Activated B cell treated with CpG ODN at 0.5 μM for 24 hours (primary cell): ENCODE measurements at regions of chr1 and their contacts with region 1.

Region 1: DNA sequence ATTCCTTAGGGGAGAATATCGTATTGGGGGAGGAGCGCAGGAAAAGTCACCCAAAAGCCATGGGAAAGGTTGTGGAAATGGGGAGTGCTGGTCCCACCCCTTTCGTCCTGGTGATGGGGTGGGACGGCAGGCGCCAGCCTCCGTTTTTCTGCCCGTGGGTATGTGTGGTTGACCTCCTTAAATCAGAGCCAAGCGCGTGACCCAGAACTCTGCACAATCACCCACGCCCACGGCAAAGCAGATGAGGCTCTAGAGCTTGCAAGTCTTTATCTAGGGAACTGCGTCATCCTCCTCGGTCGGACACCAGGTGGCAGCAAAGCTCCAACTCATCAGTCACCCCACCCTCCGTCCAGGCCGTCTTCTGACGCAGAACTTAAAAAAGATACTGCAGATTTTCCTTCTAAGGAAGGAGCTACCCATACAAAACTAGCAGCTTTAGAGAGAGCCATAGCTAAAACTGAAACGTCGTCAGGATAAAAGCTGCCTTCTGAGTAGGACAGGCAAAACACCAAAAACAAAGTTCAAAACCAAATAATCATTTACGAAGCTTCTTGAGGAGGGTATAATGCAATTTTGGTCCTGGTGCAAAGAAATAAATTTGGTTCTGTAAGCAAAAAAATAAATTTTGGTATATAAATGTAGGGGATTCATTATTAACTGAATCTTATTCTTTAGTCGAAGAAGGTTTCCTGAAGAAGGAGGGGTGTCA is 62.0 kb downstream of the TBX19 start:
- DNase-seq: peak; percentile 65
- ATAC-seq: peak; percentile 100
- H3K4me3 Mint-ChIP-seq: no peak overlapping the region
- H3K27ac Mint-ChIP-seq: no peak overlapping the region
- H3K4me1 Mint-ChIP-seq: peaks cover 9% of the 10 kb centered on the region
- H3K27me3 Mint-ChIP-seq: no peaks in the 10 kb centered on the region
- CTCF ChIP-seq: no peak

Region 2: GRCh38 chr1:168178638-168179437 is 163.9 kb before region 1 on chr1 and contains the start of gene TIPRL:
- CTCF ChIA-PET with region 1: no interaction called
- POLR2A ChIA-PET with region 1: no interaction called
- intact Hi-C with region 1: loop called (anchors 1 kb)
- DNase-seq: peak; percentile 92
- ATAC-seq: peak; percentile 88
- H3K4me3 Mint-ChIP-seq: no peak within 1 kb of the TSS
- H3K27ac Mint-ChIP-seq: no peak within 1 kb of the TSS
- H3K4me1 Mint-ChIP-seq: peaks cover 2% of the 10 kb centered on the region
- H3K27me3 Mint-ChIP-seq: peaks cover 8% of the 10 kb centered on the region
- CTCF ChIP-seq: no peak
- total RNA-seq, gene TIPRL: 25.5 and 29.8 TPM in 2 replicates

Region 3: DNA sequence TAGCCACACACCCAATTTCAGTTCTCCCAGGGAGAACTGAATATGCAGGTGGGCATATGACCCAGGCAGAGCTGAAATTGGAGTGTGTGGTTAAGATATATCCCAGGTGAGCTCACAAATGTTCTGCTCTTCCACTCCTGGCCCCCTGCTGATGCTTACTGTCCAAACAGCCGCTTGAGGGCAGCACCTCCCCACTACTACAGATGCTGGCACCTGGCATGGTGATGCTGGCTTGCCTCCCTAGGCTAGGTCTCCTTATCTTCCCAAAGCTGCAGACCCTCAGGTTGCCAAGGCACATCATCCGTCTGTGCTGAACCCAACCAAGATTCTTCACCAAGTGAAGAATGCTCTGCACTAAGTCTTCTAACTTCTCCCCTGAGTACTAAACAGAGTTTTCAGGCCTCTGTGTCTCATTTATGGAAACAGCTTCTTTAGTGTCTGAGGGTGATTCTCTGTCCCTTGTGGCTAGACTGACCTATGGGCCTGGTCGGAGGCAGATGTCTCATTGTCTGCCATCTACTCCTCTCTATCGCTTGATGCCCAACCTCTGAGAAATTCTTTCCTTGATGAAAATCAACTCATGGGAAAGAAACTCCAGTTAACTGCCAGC is 260.9 kb after region 1 on chr1:
- CTCF ChIA-PET with region 1: interaction called, 11 read pairs
- POLR2A ChIA-PET with region 1: no interaction called
- intact Hi-C with region 1: no loop called
- DNase-seq: peak; percentile 31
- ATAC-seq: peak; percentile 45
- H3K4me3 Mint-ChIP-seq: no peak overlapping the region
- H3K27ac Mint-ChIP-seq: no peak overlapping the region
- H3K4me1 Mint-ChIP-seq: no peaks in the 10 kb centered on the region
- H3K27me3 Mint-ChIP-seq: peaks cover 8% of the 10 kb centered on the region
- CTCF ChIP-seq: no peak

Region 4: DNA sequence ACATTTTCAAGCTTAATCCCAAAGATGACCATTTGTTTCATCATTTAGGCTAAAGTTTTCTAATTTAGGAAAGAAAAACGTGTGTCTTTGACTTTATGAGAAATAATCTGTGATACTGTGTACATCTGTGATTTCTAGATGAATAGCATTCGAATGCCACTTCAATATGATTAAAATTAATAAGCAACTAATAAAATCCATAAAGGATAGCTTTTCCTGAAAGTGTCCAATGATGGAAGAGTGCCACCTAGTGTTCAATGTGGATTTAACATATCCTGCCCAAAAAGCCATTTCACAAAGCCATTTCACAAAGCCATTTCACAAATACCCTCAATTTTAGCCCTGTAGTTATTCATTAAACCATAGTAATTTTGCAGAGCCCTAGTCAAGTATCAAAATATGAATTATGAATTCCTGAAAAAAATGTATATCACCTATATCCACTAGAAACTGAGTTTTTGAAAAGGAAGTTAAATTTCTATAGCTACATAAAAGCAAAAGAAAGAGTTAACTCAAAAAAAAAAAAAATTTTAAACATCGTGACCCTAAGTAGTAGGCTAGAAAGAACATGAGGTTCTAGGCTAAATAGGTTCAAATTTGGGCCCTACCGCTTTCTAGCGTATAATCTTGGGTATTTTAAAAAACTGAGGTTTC is 1005.8 kb after region 1 on chr1:
- CTCF ChIA-PET with region 1: interaction called, 141 read pairs
- POLR2A ChIA-PET with region 1: interaction called, 3 read pairs
- intact Hi-C with region 1: no loop called
- DNase-seq: no peak
- ATAC-seq: no peak
- H3K4me3 Mint-ChIP-seq: no peak overlapping the region
- H3K27ac Mint-ChIP-seq: no peak overlapping the region
- H3K4me1 Mint-ChIP-seq: no peaks in the 10 kb centered on the region
- H3K27me3 Mint-ChIP-seq: no peaks in the 10 kb centered on the region
- CTCF ChIP-seq: peak; percentile 35

Region 5: GRCh38 chr1:169546087-169546995 is 1203.6 kb after region 1 on chr1:
- CTCF ChIA-PET with region 1: interaction called, 24 read pairs
- POLR2A ChIA-PET with region 1: no interaction called
- intact Hi-C with region 1: loop called (anchors 1 kb)
- DNase-seq: no peak
- ATAC-seq: peak; percentile 78
- H3K4me3 Mint-ChIP-seq: no peak overlapping the region
- H3K27ac Mint-ChIP-seq: no peak overlapping the region
- H3K4me1 Mint-ChIP-seq: no peaks in the 10 kb centered on the region
- H3K27me3 Mint-ChIP-seq: peaks cover 3% of the 10 kb centered on the region
- CTCF ChIP-seq: peak; percentile 73

Region 6: GRCh38 chr1:170074250-170075157 is 1731.8 kb after region 1 on chr1 and contains the start of gene KIFAP3:
- CTCF ChIA-PET with region 1: no interaction called
- POLR2A ChIA-PET with region 1: no interaction called
- intact Hi-C with region 1: loop called (anchors 10 kb)
- DNase-seq: peak; percentile 89
- ATAC-seq: peak; percentile 93
- H3K4me3 Mint-ChIP-seq: peak within 1 kb of the TSS; percentile 94
- H3K27ac Mint-ChIP-seq: peak within 1 kb of the TSS; percentile 87
- H3K4me1 Mint-ChIP-seq: peaks cover 52% of the 10 kb centered on the region
- H3K27me3 Mint-ChIP-seq: peaks cover 2% of the 10 kb centered on the region
- CTCF ChIP-seq: no peak
- total RNA-seq, gene KIFAP3: 11.8 and 12.7 TPM in 2 replicates